Endothelial cell of umbilical vein (primary cell): ENCODE measurements at regions of chr6 and their contacts with region 1.

Region 1: GRCh38 chr6:121143476-121143875 is 190.8 kb downstream of the TBC1D32 start:
- DNase-seq: no peak
- H3K4me3 ChIP-seq: no peak overlapping the region
- H3K27ac ChIP-seq: no peak overlapping the region
- H3K4me1 ChIP-seq: no peaks in the 10 kb centered on the region
- H3K27me3 ChIP-seq: no peaks in the 10 kb centered on the region
- CTCF ChIP-seq: no peak
- POLR2A ChIP-seq: no peak

Region 2: GRCh38 chr6:121171879-121172278 is 28.4 kb after region 1 on chr6:
- CTCF ChIA-PET with region 1: no interaction called
- POLR2A ChIA-PET with region 1: no interaction called
- dilution Hi-C with region 1: no loop called
- intact Hi-C with region 1: no loop called
- DNase-seq: no peak
- H3K4me3 ChIP-seq: no peak overlapping the region
- H3K27ac ChIP-seq: no peak overlapping the region
- H3K4me1 ChIP-seq: no peaks in the 10 kb centered on the region
- H3K27me3 ChIP-seq: no peaks in the 10 kb centered on the region
- CTCF ChIP-seq: no peak
- POLR2A ChIP-seq: no peak

Region 3: GRCh38 chr6:121187200-121188145 is 44.0 kb after region 1 on chr6:
- CTCF ChIA-PET with region 1: no interaction called
- POLR2A ChIA-PET with region 1: no interaction called
- dilution Hi-C with region 1: no loop called
- intact Hi-C with region 1: loop called (anchors 1 kb)
- DNase-seq: no peak
- H3K4me3 ChIP-seq: no peak overlapping the region
- H3K27ac ChIP-seq: no peak overlapping the region
- H3K4me1 ChIP-seq: no peaks in the 10 kb centered on the region
- H3K27me3 ChIP-seq: no peaks in the 10 kb centered on the region
- CTCF ChIP-seq: no peak
- POLR2A ChIP-seq: no peak